Activated CD4-positive, alpha-beta T cell treated with anti-CD3 and anti-CD28 coated beads, Interleukin-2, amount 10 ng/mL, durations not matched to agents 7 days and 5 days (primary cell): ENCODE measurements at regions of chr14 and their contacts with region 1.

Region 1: GRCh38 chr14:105944632-105945610 is 418.5 kb downstream of the TMEM121 start:
- DNase-seq: peak; percentile 80
- H3K4me3 Mint-ChIP-seq: no peak overlapping the region
- H3K27ac Mint-ChIP-seq: peak overlapping the region; percentile 42
- H3K4me1 Mint-ChIP-seq: peaks cover 24% of the 10 kb centered on the region
- H3K27me3 Mint-ChIP-seq: peaks cover 2% of the 10 kb centered on the region

Region 2: DNA sequence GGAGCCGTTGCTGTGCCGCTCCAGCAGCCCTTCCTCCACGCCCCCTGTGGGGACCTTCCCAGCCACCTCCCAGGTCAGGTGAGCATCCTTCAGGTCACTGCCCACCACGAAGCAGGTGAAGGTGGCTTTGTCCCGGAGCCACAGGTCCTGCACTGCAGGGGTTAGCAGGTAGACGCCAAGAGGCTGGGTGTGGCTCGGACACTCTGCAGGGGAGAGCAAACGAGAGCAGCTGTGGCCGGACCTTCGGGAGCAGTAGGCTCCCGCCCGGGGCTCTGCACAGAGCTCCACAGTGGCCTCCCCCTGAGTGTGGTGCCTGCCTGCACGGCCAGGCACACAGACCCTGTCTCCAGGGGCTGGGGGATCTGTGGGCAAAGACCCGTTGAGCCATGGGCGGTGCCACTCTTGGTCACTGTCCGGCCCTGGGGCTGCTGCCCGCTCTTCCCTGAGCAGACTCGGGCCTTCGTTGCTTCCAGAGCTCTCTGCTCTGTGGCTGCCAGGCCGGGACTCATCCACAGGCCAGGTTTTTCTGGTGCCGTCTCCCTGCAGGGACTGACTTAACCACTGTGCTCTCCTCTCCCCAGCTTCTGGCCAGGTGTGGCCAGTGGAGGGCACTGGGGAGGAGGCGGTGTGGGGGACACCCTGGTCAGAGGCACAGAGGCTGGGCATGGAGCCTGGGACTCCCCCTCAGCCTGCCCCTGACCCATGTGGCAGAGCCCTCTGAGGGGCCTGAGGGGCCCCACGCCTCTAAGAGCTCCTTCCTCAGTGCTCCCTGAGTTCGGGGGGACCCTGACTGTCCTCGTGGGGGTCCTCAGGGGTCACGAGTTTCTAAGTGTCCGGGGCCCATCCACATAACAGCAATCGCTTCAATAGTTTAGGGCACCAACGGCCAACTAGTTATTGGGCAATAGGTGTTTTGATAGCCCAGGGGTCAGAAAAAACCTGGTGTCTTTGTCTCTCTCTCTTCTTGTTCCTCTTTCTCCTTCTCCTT is 103.6 kb before region 1 on chr14:
- CTCF ChIA-PET with region 1: no interaction called
- POLR2A ChIA-PET with region 1: no interaction called
- DNase-seq: no peak
- H3K4me3 Mint-ChIP-seq: no peak overlapping the region
- H3K27ac Mint-ChIP-seq: no peak overlapping the region
- H3K4me1 Mint-ChIP-seq: no peaks in the 10 kb centered on the region
- H3K27me3 Mint-ChIP-seq: no peaks in the 10 kb centered on the region

Region 3: GRCh38 chr14:105917933-105918436 is 26.9 kb before region 1 on chr14:
- CTCF ChIA-PET with region 1: no interaction called
- POLR2A ChIA-PET with region 1: no interaction called
- DNase-seq: no peak
- H3K4me3 Mint-ChIP-seq: no peak overlapping the region
- H3K27ac Mint-ChIP-seq: no peak overlapping the region
- H3K4me1 Mint-ChIP-seq: no peaks in the 10 kb centered on the region
- H3K27me3 Mint-ChIP-seq: peaks cover 3% of the 10 kb centered on the region

Region 4: GRCh38 chr14:105933238-105933637 is 11.7 kb before region 1 on chr14:
- CTCF ChIA-PET with region 1: interaction called, 13 read pairs
- POLR2A ChIA-PET with region 1: no interaction called
- DNase-seq: no peak
- H3K4me3 Mint-ChIP-seq: no peak overlapping the region
- H3K27ac Mint-ChIP-seq: no peak overlapping the region
- H3K4me1 Mint-ChIP-seq: no peaks in the 10 kb centered on the region
- H3K27me3 Mint-ChIP-seq: peaks cover 46% of the 10 kb centered on the region